ENCODE measurements at regions of chr7 and their contacts with region 1.

Region 1: DNA sequence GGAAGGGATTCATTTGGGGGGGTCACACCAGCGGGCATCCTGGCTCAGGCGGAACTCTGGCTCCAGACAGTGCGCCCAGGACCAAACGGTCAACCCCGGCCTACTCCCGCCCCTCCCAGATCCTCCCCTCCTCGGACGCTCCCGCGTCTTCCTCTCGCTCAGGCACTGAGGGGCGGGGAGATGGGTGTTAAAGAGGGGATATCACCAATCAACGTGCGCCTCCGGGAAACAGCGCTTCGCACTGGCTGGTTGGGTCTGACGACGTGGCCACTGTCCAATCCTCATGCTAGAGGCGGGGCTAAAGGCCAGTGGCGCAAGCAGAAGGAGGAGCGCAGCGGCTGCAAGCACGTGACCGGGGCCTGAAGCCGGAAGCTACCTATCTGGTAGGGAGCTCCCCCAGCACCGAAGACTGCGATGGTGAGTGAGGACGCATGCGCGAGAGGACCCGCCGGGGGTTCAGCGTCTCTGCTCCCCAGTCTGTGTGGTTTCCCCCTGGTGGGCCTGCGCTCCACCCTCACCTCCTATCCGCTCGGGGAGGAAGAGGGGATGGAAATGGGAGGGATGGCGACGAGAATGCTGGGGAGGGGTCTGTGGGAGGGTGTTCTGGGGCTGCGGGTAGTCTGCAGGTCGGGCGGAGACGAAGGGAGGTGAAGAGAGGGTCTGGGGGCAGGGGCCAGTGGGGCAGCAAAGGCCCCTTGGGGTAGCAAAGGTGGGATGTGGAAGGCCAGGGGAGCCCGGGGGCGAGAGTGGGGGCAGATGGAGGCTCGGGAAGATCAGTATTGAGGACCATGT is at the start of gene LAMTOR4:
- DNase-seq: peak; percentile 86
- ATAC-seq: peak; percentile 98
- H3K4me3 Mint-ChIP-seq: peak within 1 kb of the TSS; percentile 100
- H3K27ac Mint-ChIP-seq: peak within 1 kb of the TSS; percentile 99
- H3K4me1 Mint-ChIP-seq: peaks cover 46% of the 10 kb centered on the region
- H3K27me3 Mint-ChIP-seq: no peaks in the 10 kb centered on the region
- CTCF ChIP-seq: no peak
- total RNA-seq, gene LAMTOR4: 151 and 161 TPM in 2 replicates

Region 2: DNA sequence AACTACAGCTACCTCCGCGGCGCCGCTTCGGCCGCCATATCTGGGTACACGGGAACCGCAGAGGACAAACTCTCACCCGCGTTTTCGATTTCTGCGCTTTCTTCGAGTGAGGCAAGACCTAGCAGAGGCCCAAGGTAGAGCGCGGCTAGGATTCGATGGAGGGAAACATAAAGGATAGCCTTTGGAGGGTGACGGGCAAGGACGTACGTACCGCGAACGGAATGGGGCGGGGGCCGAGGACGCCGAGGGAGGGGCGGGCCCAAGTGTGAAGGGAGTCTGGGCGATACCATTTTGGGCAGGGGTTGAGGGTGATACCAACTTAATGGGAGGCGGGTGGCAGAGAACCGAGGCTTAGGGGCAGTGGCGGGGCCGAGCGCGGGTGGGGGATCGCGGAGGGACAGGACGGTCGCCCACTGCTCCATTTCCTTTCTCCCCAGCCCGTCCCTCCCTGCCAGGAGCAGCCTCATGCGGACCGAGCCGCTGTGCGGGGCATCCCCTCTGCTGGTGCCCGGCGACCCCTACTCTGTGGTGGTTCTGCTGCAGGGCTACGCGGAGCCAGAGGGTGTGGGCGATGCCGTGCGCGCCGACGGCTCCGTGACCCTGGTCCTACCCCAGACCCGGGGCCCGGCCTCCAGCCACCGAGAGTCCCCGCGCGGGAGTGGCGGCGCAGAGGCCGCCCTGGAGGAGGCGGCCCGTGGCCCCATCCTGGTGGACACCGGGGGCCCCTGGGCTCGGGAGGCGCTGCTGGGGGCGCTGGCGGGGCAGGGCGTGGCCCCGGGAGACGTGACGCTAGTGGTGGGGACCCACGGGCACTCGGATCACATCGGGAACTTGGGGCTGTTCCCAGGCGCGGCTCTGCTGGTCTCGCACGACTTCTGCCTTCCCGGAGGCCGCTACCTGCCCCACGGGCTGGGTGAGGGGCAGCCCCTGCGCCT is 21.6 kb before region 1 on chr7 and contains the start of gene MBLAC1:
- CTCF ChIA-PET with region 1: interaction called, 5 read pairs
- POLR2A ChIA-PET with region 1: interaction called, 21 read pairs
- intact Hi-C with region 1: loop called (anchors 1 kb)
- DNase-seq: peak; percentile 81
- ATAC-seq: peak; percentile 85
- H3K4me3 Mint-ChIP-seq: peak within 1 kb of the TSS; percentile 100
- H3K27ac Mint-ChIP-seq: peak within 1 kb of the TSS; percentile 100
- H3K4me1 Mint-ChIP-seq: peaks cover 41% of the 10 kb centered on the region
- H3K27me3 Mint-ChIP-seq: no peaks in the 10 kb centered on the region
- CTCF ChIP-seq: no peak
- total RNA-seq, gene MBLAC1: 1.9 and 2.2 TPM in 2 replicates

Region 3: GRCh38 chr7:100137851-100138760 is 10.6 kb before region 1 on chr7:
- CTCF ChIA-PET with region 1: interaction called, 5 read pairs
- POLR2A ChIA-PET with region 1: interaction called, 16 read pairs
- intact Hi-C with region 1: loop called (anchors 1 kb)
- DNase-seq: no peak
- ATAC-seq: peak; percentile 81
- H3K4me3 Mint-ChIP-seq: peak overlapping the region; percentile 32
- H3K27ac Mint-ChIP-seq: peak overlapping the region; percentile 68
- H3K4me1 Mint-ChIP-seq: peaks cover 25% of the 10 kb centered on the region
- H3K27me3 Mint-ChIP-seq: no peaks in the 10 kb centered on the region
- CTCF ChIP-seq: no peak

Region 4: GRCh38 chr7:100177045-100178001 is 28.6 kb after region 1 on chr7 and contains the starts of genes GPC2 and STAG3:
- CTCF ChIA-PET with region 1: no interaction called
- POLR2A ChIA-PET with region 1: interaction called, 31 read pairs
- intact Hi-C with region 1: loop called (anchors 1 kb)
- DNase-seq: peak; percentile 97
- ATAC-seq: peak; percentile 95
- H3K4me3 Mint-ChIP-seq: peak within 1 kb of the TSS; percentile 84
- H3K27ac Mint-ChIP-seq: peak within 1 kb of the TSS; percentile 68
- H3K4me1 Mint-ChIP-seq: peaks cover 21% of the 10 kb centered on the region
- H3K27me3 Mint-ChIP-seq: peaks cover 4% of the 10 kb centered on the region
- CTCF ChIP-seq: no peak
- total RNA-seq, gene GPC2: 5.0 and 5.1 TPM in 2 replicates
- total RNA-seq, gene STAG3: 41.3 and 42.4 TPM in 2 replicates

Region 5: GRCh38 chr7:100200693-100201092 is 51.9 kb after region 1 on chr7:
- CTCF ChIA-PET with region 1: interaction called, 4 read pairs
- POLR2A ChIA-PET with region 1: interaction called, 13 read pairs
- intact Hi-C with region 1: no loop called
- DNase-seq: no peak
- ATAC-seq: no peak
- H3K4me3 Mint-ChIP-seq: peak overlapping the region; percentile 77
- H3K27ac Mint-ChIP-seq: peak overlapping the region; percentile 94
- H3K4me1 Mint-ChIP-seq: peaks cover 63% of the 10 kb centered on the region
- H3K27me3 Mint-ChIP-seq: no peaks in the 10 kb centered on the region
- CTCF ChIP-seq: no peak

Region 6: GRCh38 chr7:100215895-100216294 is 67.1 kb after region 1 on chr7:
- CTCF ChIA-PET with region 1: no interaction called
- POLR2A ChIA-PET with region 1: interaction called, 14 read pairs
- intact Hi-C with region 1: loop called (anchors 1 kb)
- DNase-seq: no peak
- ATAC-seq: no peak
- H3K4me3 Mint-ChIP-seq: no peak overlapping the region
- H3K27ac Mint-ChIP-seq: peak overlapping the region; percentile 81
- H3K4me1 Mint-ChIP-seq: peaks cover 89% of the 10 kb centered on the region
- H3K27me3 Mint-ChIP-seq: no peaks in the 10 kb centered on the region
- CTCF ChIP-seq: no peak

Region 7: GRCh38 chr7:100221231-100221718 is 72.5 kb after region 1 on chr7:
- CTCF ChIA-PET with region 1: no interaction called
- POLR2A ChIA-PET with region 1: interaction called, 13 read pairs
- intact Hi-C with region 1: loop called (anchors 1 kb)
- DNase-seq: peak; percentile 48
- ATAC-seq: peak; percentile 40
- H3K4me3 Mint-ChIP-seq: peak overlapping the region; percentile 86
- H3K27ac Mint-ChIP-seq: peak overlapping the region; percentile 95
- H3K4me1 Mint-ChIP-seq: peaks cover 84% of the 10 kb centered on the region
- H3K27me3 Mint-ChIP-seq: no peaks in the 10 kb centered on the region
- CTCF ChIP-seq: no peak